Activated naive CD4-positive, alpha-beta T cell treated with anti-CD3 and anti-CD28 coated beads for 36 hours (primary cell): ENCODE measurements at regions of chr2 and their contacts with region 1.

Region 1: DNA sequence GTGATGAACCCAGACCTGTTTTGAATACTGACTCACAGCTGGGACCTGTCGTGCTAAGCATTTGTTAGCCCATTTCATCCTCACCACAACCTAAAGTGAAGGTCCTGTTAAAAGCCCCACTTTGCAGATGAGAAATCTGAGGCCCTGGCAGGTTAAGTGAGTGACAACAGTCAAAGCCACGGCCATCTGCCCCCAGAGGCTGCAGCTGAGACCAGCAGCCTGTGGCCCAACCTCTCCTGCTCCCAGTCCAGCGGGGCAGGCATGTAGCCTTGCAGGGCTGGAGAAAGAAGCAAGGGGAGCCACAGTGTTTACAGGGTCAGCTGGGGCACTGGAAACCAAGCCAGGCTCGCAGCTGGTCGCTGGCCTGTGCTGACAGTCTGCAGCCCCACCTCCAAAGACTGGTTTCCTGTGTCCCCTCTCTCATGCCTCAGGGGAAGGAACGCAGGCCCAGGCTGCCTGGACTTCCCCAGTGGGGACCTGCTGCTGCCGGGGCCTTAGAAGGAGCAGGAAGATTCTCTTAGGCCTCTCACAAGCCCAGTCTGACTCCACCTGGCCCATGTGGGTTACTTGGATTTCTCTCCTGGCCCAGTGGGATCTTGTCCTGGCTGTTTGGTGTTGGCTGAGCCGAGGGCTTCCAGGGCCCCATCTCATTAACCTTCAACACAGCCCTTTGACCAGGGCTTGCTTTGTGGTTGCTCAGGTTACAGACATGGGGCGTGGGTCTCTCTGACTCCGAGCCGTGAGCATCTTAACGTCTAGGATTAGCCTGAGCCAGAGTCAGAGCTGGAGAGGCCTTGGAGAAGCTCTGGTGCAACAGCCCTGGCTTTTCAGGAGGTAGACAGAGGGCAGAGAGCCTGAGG is 1.7 kb downstream of the INPP5D start:
- DNase-seq: peak; percentile 76
- H3K4me3 Mint-ChIP-seq: peak overlapping the region; percentile 98
- H3K27ac Mint-ChIP-seq: peak overlapping the region; percentile 98
- H3K4me1 Mint-ChIP-seq: peaks cover 40% of the 10 kb centered on the region
- H3K27me3 Mint-ChIP-seq: no peaks in the 10 kb centered on the region

Region 2: GRCh38 chr2:232697100-232697865 is 364.5 kb before region 1 on chr2 and contains the start of gene GIGYF2:
- CTCF ChIA-PET with region 1: no interaction called
- intact Hi-C with region 1: loop called (anchors 5 kb)
- DNase-seq: peak; percentile 97
- H3K4me3 Mint-ChIP-seq: peak within 1 kb of the TSS; percentile 87
- H3K27ac Mint-ChIP-seq: peak within 1 kb of the TSS; percentile 70
- H3K4me1 Mint-ChIP-seq: peaks cover 36% of the 10 kb centered on the region
- H3K27me3 Mint-ChIP-seq: no peaks in the 10 kb centered on the region
- total RNA-seq, gene GIGYF2: 49.7 to 52.8 TPM

Region 3: GRCh38 chr2:233100192-233100998 is 38.6 kb after region 1 on chr2:
- CTCF ChIA-PET with region 1: interaction called, 4 read pairs
- intact Hi-C with region 1: loop called (anchors 1 kb)
- DNase-seq: peak; percentile 87
- H3K4me3 Mint-ChIP-seq: peak overlapping the region; percentile 32
- H3K27ac Mint-ChIP-seq: peak overlapping the region; percentile 66
- H3K4me1 Mint-ChIP-seq: peaks cover 63% of the 10 kb centered on the region
- H3K27me3 Mint-ChIP-seq: no peaks in the 10 kb centered on the region

Region 4: DNA sequence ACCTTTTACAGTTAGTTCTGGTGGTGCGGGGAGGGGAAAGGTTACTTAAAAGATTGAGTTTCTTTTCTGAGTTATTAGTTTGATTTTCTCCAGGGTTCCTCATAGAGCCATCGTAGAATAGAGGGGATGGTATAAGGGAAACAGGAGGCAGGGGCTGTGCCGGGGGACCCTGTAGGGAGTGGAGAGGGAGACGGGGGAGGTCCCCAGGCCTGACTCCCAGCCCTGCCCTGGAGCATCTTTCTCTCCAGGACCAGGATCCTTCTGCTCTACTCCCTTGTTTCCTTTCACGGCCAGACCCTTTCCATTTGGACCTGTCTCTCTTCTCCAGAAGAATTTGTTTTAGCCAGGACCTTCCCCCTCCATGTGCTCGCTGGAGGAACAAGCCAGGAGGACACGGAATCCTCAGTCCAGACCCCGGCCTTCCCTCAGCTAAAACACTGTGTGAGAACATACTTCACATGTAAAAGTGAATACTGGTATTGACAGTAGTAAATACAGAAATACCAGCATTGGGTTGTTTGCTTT is 327.8 kb after region 1 on chr2:
- CTCF ChIA-PET with region 1: no interaction called
- intact Hi-C with region 1: no loop called
- DNase-seq: no peak
- H3K4me3 Mint-ChIP-seq: no peak overlapping the region
- H3K27ac Mint-ChIP-seq: no peak overlapping the region
- H3K4me1 Mint-ChIP-seq: peaks cover 27% of the 10 kb centered on the region
- H3K27me3 Mint-ChIP-seq: no peaks in the 10 kb centered on the region

Region 5: DNA sequence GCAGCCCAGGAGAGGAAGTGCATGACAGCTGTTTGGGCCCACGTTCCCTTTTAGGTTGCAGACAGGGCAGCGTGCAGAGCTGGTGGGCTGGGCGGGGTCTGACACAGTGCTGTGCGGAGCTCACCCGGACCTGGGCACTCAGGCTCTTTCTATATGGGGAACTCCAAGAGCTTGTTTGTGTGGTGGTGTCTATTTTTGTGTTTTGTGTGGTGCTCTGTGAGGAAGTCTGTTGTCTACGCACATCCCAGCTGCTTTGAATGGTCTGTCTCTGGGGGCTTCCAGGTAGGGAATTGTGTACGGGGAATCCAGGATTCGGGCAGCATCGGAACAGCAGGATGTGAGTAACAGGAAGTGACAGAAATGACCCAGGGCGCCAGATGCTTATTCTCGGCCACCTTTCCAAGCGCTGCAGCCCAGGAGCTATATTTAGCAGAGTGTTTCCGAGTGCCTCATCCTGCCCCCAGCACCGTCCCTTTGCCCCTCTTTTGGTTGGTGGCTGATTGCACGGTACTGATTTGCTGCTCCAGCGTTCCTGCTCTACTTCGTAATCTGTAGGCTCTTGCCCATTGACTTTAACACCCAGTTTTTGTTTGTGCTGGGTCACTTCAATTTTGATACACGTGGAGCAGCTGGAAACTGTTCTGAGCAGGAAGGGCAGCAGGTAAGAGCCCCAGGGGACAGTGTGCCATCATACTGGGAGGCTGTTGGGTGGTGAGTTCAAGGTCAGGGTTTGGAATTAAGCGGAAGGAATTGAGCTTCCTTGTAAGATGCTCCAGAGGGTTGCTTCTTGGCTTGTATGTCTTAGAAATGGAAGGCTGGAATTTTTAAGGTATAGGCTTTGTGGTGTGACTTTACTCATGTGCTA is 357.2 kb after region 1 on chr2:
- CTCF ChIA-PET with region 1: no interaction called
- intact Hi-C with region 1: loop called (anchors 5 kb)
- DNase-seq: peak; percentile 67
- H3K4me3 Mint-ChIP-seq: peak overlapping the region; percentile 67
- H3K27ac Mint-ChIP-seq: peak overlapping the region; percentile 88
- H3K4me1 Mint-ChIP-seq: peaks cover 97% of the 10 kb centered on the region
- H3K27me3 Mint-ChIP-seq: no peaks in the 10 kb centered on the region

Region 6: GRCh38 chr2:234512884-234513669 is 1451.3 kb after region 1 on chr2:
- CTCF ChIA-PET with region 1: no interaction called
- intact Hi-C with region 1: no loop called
- DNase-seq: no peak
- H3K4me3 Mint-ChIP-seq: no peak overlapping the region
- H3K27ac Mint-ChIP-seq: no peak overlapping the region
- H3K4me1 Mint-ChIP-seq: peaks cover 8% of the 10 kb centered on the region
- H3K27me3 Mint-ChIP-seq: no peaks in the 10 kb centered on the region